ENCODE measurements at regions of chr11 and their contacts with region 1.

Region 1: GRCh38 chr11:94519478-94520084 is 7.3 kb downstream of the C11orf97 start:
- DNase-seq: no peak
- ATAC-seq: no peak
- H3K4me3 Mint-ChIP-seq: no peak overlapping the region
- H3K27ac Mint-ChIP-seq: no peak overlapping the region
- H3K4me1 Mint-ChIP-seq: no peaks in the 10 kb centered on the region
- H3K27me3 Mint-ChIP-seq: peaks cover 23% of the 10 kb centered on the region
- CTCF ChIP-seq: peak; percentile 54

Region 2: DNA sequence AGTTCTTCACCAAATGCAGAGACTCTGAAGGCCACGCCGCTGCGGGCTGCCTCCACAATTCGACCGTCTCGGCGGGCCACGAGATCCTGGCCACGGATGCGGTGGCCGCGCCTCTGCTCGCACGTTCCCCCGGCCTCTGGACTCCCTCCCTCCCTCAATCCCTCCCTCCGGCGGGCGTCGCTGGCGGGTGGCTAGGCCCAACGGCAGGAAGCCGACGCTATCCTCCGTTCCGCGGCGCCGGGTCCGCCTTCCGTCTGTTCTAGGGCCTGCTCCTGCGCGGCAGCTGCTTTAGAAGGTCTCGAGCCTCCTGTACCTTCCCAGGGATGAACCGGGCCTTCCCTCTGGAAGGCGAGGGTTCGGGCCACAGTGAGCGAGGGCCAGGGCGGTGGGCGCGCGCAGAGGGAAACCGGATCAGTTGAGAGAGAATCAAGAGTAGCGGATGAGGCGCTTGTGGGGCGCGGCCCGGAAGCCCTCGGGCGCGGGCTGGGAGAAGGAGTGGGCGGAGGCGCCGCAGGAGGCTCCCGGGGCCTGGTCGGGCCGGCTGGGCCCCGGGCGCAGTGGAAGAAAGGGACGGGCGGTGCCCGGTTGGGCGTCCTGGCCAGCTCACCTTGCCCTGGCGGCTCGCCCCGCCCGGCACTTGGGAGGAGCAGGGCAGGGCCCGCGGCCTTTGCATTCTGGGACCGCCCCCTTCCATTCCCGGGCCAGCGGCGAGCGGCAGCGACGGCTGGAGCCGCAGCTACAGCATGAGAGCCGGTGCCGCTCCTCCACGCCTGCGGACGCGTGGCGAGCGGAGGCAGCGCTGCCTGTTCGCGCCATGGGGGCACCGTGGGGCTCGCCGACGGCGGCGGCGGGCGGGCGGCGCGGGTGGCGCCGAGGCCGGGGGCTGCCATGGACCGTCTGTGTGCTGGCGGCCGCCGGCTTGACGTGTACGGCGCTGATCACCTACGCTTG is 24.4 kb after region 1 on chr11 and contains the start of gene FUT4:
- CTCF ChIA-PET with region 1: no interaction called
- POLR2A ChIA-PET with region 1: interaction called, 3 read pairs
- intact Hi-C with region 1: loop called (anchors 2 kb)
- DNase-seq: peak; percentile 72
- ATAC-seq: peak; percentile 83
- H3K4me3 Mint-ChIP-seq: peak within 1 kb of the TSS; percentile 98
- H3K27ac Mint-ChIP-seq: peak within 1 kb of the TSS; percentile 97
- H3K4me1 Mint-ChIP-seq: peaks cover 17% of the 10 kb centered on the region
- H3K27me3 Mint-ChIP-seq: peaks cover 10% of the 10 kb centered on the region
- CTCF ChIP-seq: no peak
- total RNA-seq, gene FUT4: 3.4 and 4.1 TPM in 2 replicates

Region 3: GRCh38 chr11:94593030-94593429 is 73.4 kb after region 1 on chr11:
- CTCF ChIA-PET with region 1: no interaction called
- POLR2A ChIA-PET with region 1: no interaction called
- intact Hi-C with region 1: no loop called
- DNase-seq: no peak
- ATAC-seq: no peak
- H3K4me3 Mint-ChIP-seq: no peak overlapping the region
- H3K27ac Mint-ChIP-seq: no peak overlapping the region
- H3K4me1 Mint-ChIP-seq: peaks cover 7% of the 10 kb centered on the region
- H3K27me3 Mint-ChIP-seq: no peaks in the 10 kb centered on the region
- CTCF ChIP-seq: no peak

Region 4: GRCh38 chr11:94623120-94623735 is 103.6 kb after region 1 on chr11:
- CTCF ChIA-PET with region 1: interaction called, 3 read pairs
- POLR2A ChIA-PET with region 1: no interaction called
- intact Hi-C with region 1: loop called (anchors 1 kb)
- DNase-seq: no peak
- ATAC-seq: peak; percentile 58
- H3K4me3 Mint-ChIP-seq: no peak overlapping the region
- H3K27ac Mint-ChIP-seq: no peak overlapping the region
- H3K4me1 Mint-ChIP-seq: no peaks in the 10 kb centered on the region
- H3K27me3 Mint-ChIP-seq: peaks cover 14% of the 10 kb centered on the region
- CTCF ChIP-seq: no peak

Region 5: GRCh38 chr11:94897330-94897768 is 377.8 kb after region 1 on chr11:
- CTCF ChIA-PET with region 1: interaction called, 10 read pairs
- POLR2A ChIA-PET with region 1: no interaction called
- intact Hi-C with region 1: loop called (anchors 1 kb)
- DNase-seq: no peak
- ATAC-seq: peak; percentile 50
- H3K4me3 Mint-ChIP-seq: no peak overlapping the region
- H3K27ac Mint-ChIP-seq: no peak overlapping the region
- H3K4me1 Mint-ChIP-seq: no peaks in the 10 kb centered on the region
- H3K27me3 Mint-ChIP-seq: peaks cover 4% of the 10 kb centered on the region
- CTCF ChIP-seq: peak; percentile 54